ENCODE measurements at regions of chr11 and their contacts with region 1.

Region 1: DNA sequence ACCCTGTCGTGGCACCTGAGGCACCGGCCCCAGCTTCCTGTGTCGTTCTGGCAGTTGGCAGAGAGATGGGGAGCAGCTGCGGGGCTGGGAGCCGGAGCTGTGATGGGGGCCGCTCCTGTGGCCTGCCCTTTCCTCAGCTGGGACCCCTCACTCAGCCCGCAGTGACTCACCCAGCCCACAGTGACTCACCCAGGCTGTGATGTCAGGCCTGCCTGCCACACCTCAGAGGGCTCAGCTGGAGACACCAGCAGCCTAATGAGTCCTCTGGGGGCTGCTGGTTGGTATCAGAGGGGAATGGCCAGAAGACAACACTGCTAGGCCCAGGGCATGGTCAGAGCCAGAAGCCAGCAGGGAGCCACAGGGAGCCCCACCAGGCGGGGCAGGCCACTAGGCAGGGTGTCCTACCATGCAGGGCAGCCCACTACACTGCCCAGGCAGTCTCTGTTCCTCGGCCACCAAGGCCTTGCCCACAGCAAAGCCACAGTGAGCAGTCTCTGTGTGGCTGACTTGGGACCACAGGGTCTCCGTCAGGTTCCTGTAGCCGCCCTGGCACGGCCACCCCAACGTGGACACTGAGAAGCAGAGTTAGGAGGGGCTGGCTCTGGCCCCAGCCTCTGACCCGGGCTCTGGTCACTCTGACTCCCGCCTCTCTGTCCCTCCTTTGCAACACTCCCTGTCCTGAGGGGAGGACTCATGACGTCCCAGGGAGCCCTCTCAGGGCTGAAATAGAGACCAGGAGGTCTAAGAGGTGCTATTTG is 4.2 kb upstream of the FXYD2 start:
- DNase-seq: peak; percentile 85 to 97 (median 96)
- H3K4me3 ChIP-seq: peak overlapping the region in 3 of 7 experiments; percentile 10 to 23 (median 22)
- H3K27ac ChIP-seq: peak overlapping the region in 1 of 2 experiments; percentile 34
- H3K4me1 ChIP-seq: peaks cover 0 to 73% (median 58%) of the 10 kb centered on the region in 4 experiments
- H3K27me3 ChIP-seq: no peaks in the 10 kb centered on the region

Region 2: GRCh38 chr11:117843666-117844484 is 15.1 kb after region 1 on chr11:
- CTCF ChIA-PET with region 1: interaction called, 63 read pairs
- POLR2A ChIA-PET with region 1: interaction called, 6 read pairs
- DNase-seq: peak; percentile 59 to 80 (median 73)
- H3K4me3 ChIP-seq: no peak overlapping the region
- H3K27ac ChIP-seq: no peak overlapping the region
- H3K4me1 ChIP-seq: peaks cover 0 to 18% (median 14%) of the 10 kb centered on the region in 4 experiments
- H3K27me3 ChIP-seq: no peaks in the 10 kb centered on the region